Astrocyte of the cerebellum (primary cell): ENCODE measurements at regions of chr14 and their contacts with region 1.

Region 1: DNA sequence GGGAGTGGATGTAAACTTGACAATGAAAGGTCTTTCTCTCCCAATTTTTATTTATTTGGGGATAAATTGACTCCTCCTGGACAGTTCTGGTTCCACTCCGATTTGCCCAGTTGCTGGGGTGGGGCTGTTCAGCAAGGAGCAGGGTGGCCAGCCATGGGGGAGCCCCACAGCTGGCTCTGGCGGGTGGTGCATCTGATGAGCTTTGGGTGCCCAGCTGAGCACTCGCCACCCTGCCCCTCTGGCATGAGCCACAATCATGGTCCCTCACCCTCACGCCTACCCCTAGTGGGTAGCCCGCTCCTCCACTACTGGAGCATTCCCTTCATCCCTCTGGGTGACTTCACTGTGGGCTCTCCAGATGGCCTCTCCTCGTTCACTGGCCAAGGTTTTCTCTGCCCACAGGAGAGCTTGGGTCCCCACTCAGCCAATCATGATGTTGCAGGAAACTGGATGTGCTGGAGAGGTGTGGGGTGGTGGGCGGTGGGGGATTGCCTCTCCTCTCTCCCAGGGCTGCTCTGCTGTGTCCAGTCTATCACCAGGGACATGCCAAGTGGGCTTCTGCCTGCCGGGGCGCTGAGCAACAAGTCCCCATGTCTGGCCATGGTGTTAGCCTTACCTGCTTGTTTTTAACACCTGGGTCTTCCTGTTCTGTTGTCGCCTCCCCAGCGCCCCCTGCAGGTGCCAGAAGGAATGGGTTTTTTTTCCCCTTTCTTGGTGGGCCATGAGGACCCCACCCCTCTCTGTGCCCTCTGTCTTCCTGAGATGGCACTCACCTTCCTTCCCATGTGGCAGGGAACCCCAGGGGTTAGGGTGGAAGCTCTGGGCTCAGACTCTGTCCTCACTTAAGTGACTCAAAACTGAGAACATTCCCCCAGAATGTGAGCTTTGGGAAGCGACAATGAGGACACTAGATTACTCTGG is 3.5 kb downstream of the CYP46A1 start:
- DNase-seq: no peak
- H3K4me3 ChIP-seq: no peak overlapping the region
- CTCF ChIP-seq: peak; percentile 62

Region 2: DNA sequence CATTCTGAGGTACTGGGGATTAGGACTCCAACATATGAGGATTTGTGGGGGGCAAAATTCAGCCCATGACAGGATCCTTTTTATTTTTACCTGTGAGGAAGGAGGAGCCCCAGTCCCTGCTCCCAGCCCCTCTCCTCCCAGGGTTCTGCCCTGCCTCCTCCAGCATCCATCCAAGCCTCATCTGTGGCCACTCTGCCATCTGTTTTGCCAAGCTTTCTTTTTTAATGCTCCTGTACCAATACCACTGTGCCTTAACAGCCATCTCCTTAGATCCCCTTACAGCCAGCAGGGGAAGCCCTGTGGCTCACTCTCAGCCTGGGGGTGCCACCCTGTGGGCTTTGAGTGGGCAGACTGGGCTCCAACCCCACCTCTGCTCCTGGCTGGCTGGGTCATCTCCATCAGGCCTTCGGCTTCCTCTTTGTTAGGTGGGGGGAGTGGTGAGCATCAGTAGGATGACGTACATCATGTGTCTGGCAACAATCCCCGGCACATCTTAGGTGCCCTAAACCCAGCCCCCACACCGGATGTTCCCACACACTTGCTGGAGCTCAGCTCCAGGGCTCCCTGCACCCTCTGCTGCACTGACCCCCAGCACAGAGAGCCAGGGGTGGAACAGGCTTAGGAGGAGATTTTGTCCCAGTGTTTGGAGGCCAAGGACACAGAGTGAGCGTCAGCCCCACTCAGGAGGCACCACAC is 36.8 kb after region 1 on chr14:
- in situ Hi-C with region 1: loop called (anchors 5 kb)
- DNase-seq: no peak
- H3K4me3 ChIP-seq: no peak overlapping the region
- CTCF ChIP-seq: no peak

Region 3: DNA sequence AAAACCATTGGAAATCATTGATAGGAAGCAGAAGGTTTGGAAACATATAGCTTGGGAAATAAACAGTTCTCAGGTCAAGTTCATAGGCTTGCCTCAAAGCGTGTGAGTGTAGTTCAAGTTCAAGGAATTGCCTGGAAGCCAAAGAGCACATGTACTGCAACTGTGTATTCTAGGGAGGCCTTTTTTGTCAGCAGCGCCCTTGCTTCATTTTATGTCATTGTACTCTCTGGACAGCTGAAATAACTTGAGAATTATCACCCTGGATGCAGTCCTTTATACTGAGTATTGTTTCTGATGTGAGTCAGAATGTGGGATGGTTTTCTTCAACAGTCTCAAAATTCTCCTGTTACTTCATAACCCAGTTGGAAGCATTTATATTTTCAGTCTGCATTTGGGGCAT is 361.7 kb after region 1 on chr14:
- in situ Hi-C with region 1: no loop called
- DNase-seq: no peak
- H3K4me3 ChIP-seq: no peak overlapping the region
- CTCF ChIP-seq: no peak